A673 (cell line): ENCODE measurements at regions of chr5 and their contacts with region 1.

Region 1: DNA sequence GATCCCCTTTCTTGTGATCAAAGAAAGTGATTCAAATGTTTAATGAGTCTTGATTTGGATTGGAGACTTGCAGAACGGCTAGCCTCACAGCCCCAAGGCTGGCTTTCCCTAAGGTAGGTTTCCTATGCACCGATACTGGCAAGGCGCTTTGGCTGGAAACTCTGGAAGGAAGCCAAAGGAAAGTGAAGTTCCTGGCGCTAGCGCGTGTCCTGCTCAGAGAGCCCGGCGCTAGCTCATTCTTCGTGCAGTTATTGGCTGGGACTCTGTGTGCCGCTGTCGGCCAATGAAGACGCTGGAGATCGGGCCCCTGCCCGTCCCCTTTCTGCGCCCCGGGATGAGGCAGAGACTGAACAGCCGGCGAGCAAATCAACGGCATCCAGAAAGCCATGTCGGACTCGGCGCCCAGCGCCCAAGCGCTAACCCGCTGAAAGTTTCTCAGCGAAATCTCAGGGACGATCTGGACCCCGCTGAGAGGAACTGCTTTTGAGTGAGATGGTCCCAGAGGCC is at the start of gene PCDHGC3:
- DNase-seq: peak; percentile 98
- H3K4me3 ChIP-seq: peak within 1 kb of the TSS; percentile 80
- H3K27ac ChIP-seq: peak within 1 kb of the TSS; percentile 89
- H3K4me1 ChIP-seq: peaks cover 35% of the 10 kb centered on the region
- H3K27me3 ChIP-seq: no peaks in the 10 kb centered on the region
- CTCF ChIP-seq: peak; percentile 55
- total RNA-seq, gene PCDHGC3: 103 and 112 TPM in 2 replicates

Region 2: DNA sequence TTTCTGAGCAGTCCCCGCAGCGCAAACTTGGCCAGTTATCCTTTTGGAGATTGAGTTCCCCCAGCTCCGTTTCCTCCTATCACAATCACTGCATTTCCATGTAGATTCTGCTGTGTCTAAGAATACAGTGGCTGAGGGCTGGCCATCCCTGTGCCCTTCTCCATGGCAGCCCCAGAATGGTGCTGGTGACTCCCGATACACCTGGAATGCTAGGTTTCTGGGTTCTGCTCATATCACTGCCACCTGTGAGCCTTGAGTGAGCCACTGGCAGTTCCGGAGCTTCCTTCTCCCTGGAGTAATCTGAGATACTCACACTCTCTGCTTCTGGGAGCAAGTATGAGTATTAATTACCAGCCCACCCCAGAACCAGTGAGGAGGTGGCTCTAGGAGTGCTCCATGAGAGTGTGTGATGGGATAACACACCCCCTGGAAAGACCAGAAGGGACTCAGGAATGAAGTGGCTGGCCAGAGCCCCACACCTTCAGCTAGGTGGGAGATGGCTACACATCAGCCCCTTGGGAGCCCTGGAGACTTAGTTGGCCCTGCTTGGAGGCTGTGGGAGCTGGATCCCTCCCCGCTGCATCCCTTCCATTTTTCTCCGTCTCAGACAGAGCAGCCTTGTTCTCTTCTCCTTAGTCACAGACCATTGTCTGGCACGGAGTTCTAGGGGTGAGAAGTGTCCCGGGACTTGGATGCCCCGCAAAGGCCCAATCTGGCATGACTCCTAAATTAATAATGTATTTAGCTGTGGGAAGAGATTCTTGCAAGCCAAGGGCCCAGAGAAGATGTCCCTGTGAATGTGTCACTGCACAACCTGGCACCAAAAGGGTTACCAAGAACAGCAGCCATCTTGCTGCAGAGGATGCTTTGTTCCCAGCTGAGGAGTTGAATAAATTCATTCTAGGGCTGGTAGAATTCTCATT is 18.1 kb after region 1 on chr5:
- CTCF ChIA-PET with region 1: interaction called, 5 read pairs
- POLR2A ChIA-PET with region 1: no interaction called
- intact Hi-C with region 1: loop called (anchors 2 kb)
- DNase-seq: no peak
- H3K4me3 ChIP-seq: peak overlapping the region; percentile 41
- H3K27ac ChIP-seq: peak overlapping the region; percentile 94
- H3K4me1 ChIP-seq: peaks cover 57% of the 10 kb centered on the region
- H3K27me3 ChIP-seq: no peaks in the 10 kb centered on the region
- CTCF ChIP-seq: no peak

Region 3: GRCh38 chr5:141512390-141512910 is 36.8 kb after region 1 on chr5:
- CTCF ChIA-PET with region 1: interaction called, 11 read pairs
- POLR2A ChIA-PET with region 1: no interaction called
- intact Hi-C with region 1: loop called (anchors 5 kb)
- DNase-seq: peak; percentile 87
- H3K4me3 ChIP-seq: peak overlapping the region; percentile 57
- H3K27ac ChIP-seq: peak overlapping the region; percentile 92
- H3K4me1 ChIP-seq: peaks cover 56% of the 10 kb centered on the region
- H3K27me3 ChIP-seq: no peaks in the 10 kb centered on the region
- CTCF ChIP-seq: peak; percentile 96

Region 4: DNA sequence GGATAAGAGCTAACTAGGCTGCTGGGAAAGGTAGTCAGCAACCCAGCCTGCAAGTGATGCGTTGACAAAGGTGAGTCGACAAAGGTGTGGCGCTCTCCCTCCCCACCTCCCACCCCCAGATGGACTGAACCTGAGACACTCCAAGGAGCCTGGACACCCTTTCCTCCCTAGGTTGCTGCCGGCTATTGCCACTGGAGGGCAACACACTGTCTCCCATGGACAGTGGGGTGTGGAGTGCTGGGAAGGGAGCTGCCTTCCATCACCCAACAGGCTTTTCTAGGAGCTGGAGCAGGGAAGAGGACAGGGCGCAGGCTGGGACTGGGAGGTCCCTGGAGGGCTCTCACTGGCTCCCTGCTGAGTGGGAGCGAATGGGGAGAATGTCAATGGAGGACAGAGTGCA is 281.7 kb after region 1 on chr5:
- CTCF ChIA-PET with region 1: interaction called, 10 read pairs
- POLR2A ChIA-PET with region 1: no interaction called
- intact Hi-C with region 1: no loop called
- DNase-seq: no peak
- H3K4me3 ChIP-seq: no peak overlapping the region
- H3K27ac ChIP-seq: no peak overlapping the region
- H3K4me1 ChIP-seq: no peaks in the 10 kb centered on the region
- H3K27me3 ChIP-seq: peaks cover 44% of the 10 kb centered on the region
- CTCF ChIP-seq: peak; percentile 44